ENCODE measurements at regions of chr4 and their contacts with region 1.

Region 1: GRCh38 chr4:16026160-16026761 is 57.6 kb downstream of the PROM1 start:
- DNase-seq: peak; percentile 37 to 65 (median 47)
- ATAC-seq: peak; percentile 61; the same call in 2 of the 3 replicates
- H3K4me3 ChIP-seq: no peak overlapping the region
- H3K27ac ChIP-seq: no peak overlapping the region
- H3K4me1 ChIP-seq: no peaks in the 10 kb centered on the region
- H3K27me3 ChIP-seq: peaks cover 5 to 14% of the 10 kb centered on the region in 2 experiments; a peak in 2 of 5 replicates
- CTCF ChIP-seq: peak; percentile 59 to 81 (median 66); a peak in 5 of 6 replicates
- EP300 ChIP-seq: no peak
- POLR2A ChIP-seq: no peak
- RAD21 ChIP-seq: peak; percentile 89 to 93

Region 2: DNA sequence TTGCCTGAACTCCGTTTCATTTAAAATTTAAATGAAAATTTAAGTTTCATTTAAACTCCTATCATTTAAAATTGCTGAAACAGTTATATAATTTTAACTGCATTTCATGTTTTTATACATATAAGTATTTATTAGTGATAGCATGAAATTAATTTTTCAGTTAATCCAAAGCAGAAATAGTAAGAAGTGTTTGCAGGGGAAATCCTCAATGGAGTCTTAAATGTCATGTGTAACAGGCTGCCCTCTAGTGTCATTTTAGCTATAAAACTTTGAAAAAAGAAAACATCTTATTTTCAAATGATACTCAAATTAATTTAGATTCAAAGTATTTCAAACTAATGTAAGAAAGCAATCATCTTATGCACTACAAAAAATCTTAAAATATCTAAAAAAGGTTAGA is 172.8 kb after region 1 on chr4:
- CTCF ChIA-PET with region 1: no interaction called
- POLR2A ChIA-PET with region 1: no interaction called
- in situ Hi-C with region 1: no loop called
- intact Hi-C with region 1: loop called (anchors 2 kb)
- DNase-seq: no peak
- ATAC-seq: no peak
- H3K4me3 ChIP-seq: no peak overlapping the region
- H3K27ac ChIP-seq: no peak overlapping the region
- H3K4me1 ChIP-seq: no peaks in the 10 kb centered on the region
- H3K27me3 ChIP-seq: no peaks in the 10 kb centered on the region
- CTCF ChIP-seq: peak in 1 of 3 experiments; percentile 43; a peak in 3 of 6 replicates
- EP300 ChIP-seq: no peak
- POLR2A ChIP-seq: no peak
- RAD21 ChIP-seq: peak; percentile 8 to 28; a peak in 3 of 4 replicates

Region 3: GRCh38 chr4:16264798-16265197 is 238.5 kb after region 1 on chr4:
- CTCF ChIA-PET with region 1: interaction called, 28 read pairs
- POLR2A ChIA-PET with region 1: no interaction called
- in situ Hi-C with region 1: loop called (anchors 5 kb)
- intact Hi-C with region 1: loop called (anchors 1 kb)
- DNase-seq: peak in 2 of 4 experiments; percentile 30 to 34
- ATAC-seq: peak; percentile 79
- H3K4me3 ChIP-seq: no peak overlapping the region
- H3K27ac ChIP-seq: no peak overlapping the region
- H3K4me1 ChIP-seq: no peaks in the 10 kb centered on the region
- H3K27me3 ChIP-seq: no peaks in the 10 kb centered on the region
- CTCF ChIP-seq: peak; percentile 33 to 69 (median 40); a peak in 3 of 6 replicates
- EP300 ChIP-seq: no peak
- POLR2A ChIP-seq: no peak
- RAD21 ChIP-seq: peak; percentile 77 to 79

Region 4: GRCh38 chr4:16443504-16444088 is 417.3 kb after region 1 on chr4:
- CTCF ChIA-PET with region 1: interaction called, 4 read pairs
- POLR2A ChIA-PET with region 1: no interaction called
- in situ Hi-C with region 1: no loop called
- intact Hi-C with region 1: loop called (anchors 1 kb)
- DNase-seq: peak; percentile 33 to 54 (median 37)
- ATAC-seq: peak; percentile 83
- H3K4me3 ChIP-seq: no peak overlapping the region
- H3K27ac ChIP-seq: no peak overlapping the region
- H3K4me1 ChIP-seq: no peaks in the 10 kb centered on the region
- H3K27me3 ChIP-seq: no peaks in the 10 kb centered on the region
- CTCF ChIP-seq: peak; percentile 35 to 65 (median 62); a peak in 5 of 6 replicates
- EP300 ChIP-seq: no peak
- POLR2A ChIP-seq: no peak
- RAD21 ChIP-seq: peak in 1 of 2 experiments; percentile 51; a peak in 3 of 4 replicates

Region 5: DNA sequence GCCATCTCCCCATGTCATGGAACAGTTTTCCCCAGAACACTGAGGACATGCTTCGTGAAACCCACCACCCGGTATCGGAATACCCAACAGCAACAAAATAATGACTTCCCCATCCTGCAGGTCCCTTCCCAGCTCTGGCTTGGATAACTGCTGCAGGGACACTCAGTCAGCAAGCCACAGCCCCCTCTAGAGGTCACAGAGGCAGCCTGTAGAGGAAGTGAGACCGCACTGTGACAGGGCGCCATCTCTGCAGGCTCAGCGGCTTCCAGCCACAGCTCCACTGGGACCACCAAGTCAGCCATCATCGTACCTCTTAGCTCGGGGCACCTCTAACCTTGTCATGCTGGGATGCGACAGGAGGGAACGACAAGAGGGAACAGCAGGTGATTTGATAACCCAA is 556.3 kb after region 1 on chr4:
- CTCF ChIA-PET with region 1: no interaction called
- POLR2A ChIA-PET with region 1: no interaction called
- in situ Hi-C with region 1: no loop called
- intact Hi-C with region 1: loop called (anchors 10 kb)
- DNase-seq: peak; percentile 17 to 47 (median 34)
- ATAC-seq: peak; percentile 98
- H3K4me3 ChIP-seq: no peak overlapping the region
- H3K27ac ChIP-seq: no peak overlapping the region
- H3K4me1 ChIP-seq: no peaks in the 10 kb centered on the region
- H3K27me3 ChIP-seq: no peaks in the 10 kb centered on the region; a peak in 1 of 5 replicates
- CTCF ChIP-seq: peak; percentile 59 to 73 (median 71)
- EP300 ChIP-seq: no peak
- POLR2A ChIP-seq: no peak
- RAD21 ChIP-seq: peak in 1 of 2 experiments; percentile 36; a peak in 2 of 4 replicates

Measured in K562 (cell line).